ENCODE measurements at regions of chr15 and their contacts with region 1.

Region 1: DNA sequence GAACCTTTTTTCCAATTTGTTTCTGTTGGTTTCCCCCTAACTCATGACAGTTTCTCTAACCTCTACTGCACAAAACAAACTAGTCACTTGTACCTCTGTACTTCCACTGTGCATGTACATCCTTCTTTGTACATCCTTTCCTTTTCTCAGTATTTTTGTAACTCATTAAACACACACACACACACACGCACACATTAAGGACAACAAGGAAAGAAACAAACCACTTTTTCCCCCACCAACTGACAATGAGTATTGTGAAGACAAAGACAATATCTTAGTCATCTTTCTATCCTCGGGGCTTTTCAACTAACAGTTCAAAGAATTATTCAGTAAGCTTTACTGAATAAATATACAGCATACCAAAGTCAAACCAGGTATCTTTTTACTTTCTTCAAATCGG is 170.5 kb downstream of the VPS13C start:
- DNase-seq: no peak
- ATAC-seq: no peak
- H3K4me3 ChIP-seq: no peak overlapping the region
- H3K27ac ChIP-seq: no peak overlapping the region
- H3K4me1 ChIP-seq: no peaks in the 10 kb centered on the region
- H3K27me3 ChIP-seq: no peaks in the 10 kb centered on the region
- CTCF ChIP-seq: no peak

Region 2: DNA sequence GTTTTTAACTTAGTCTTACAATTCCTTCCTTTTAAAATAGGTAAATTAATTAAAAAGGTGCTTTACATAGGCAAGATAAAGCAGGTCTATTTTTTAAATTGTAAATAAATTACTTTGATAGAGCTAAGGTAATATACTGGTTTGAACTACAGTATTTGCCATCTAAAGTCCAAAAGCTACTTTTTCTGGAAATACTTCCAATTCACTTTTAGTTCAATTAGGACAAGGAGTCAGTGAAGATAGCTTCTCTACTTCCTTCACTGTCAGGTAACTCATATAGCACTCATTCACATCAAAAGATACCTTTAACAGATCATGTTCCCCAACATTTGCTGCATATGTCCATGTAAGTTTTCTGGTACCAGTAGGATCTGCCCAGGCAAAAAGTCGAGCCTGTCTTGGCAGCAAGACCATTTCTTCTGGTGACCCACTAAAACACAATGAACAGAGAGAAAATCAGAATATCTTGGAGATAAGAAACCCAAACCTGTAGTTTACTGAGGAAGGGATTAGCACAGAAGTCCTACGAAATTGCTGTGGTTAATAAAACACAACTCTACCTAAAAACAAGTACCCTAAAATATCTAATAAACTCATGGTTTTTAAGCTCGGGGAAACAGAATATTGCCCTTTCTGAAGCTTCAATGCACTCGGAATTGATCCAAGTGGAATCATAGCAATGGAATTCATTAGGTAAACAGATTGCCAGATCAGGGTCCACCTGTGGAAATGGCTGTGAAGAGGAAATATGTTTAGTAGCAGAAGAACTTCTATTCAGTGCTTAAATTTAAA is 17.5 kb after region 1 on chr15:
- CTCF ChIA-PET with region 1: no interaction called
- POLR2A ChIA-PET with region 1: no interaction called
- in situ Hi-C with region 1: no loop called
- intact Hi-C with region 1: loop called (anchors 2 kb)
- DNase-seq: no peak
- ATAC-seq: no peak
- H3K4me3 ChIP-seq: no peak overlapping the region
- H3K27ac ChIP-seq: no peak overlapping the region
- H3K4me1 ChIP-seq: no peaks in the 10 kb centered on the region
- H3K27me3 ChIP-seq: no peaks in the 10 kb centered on the region
- CTCF ChIP-seq: no peak

Region 3: DNA sequence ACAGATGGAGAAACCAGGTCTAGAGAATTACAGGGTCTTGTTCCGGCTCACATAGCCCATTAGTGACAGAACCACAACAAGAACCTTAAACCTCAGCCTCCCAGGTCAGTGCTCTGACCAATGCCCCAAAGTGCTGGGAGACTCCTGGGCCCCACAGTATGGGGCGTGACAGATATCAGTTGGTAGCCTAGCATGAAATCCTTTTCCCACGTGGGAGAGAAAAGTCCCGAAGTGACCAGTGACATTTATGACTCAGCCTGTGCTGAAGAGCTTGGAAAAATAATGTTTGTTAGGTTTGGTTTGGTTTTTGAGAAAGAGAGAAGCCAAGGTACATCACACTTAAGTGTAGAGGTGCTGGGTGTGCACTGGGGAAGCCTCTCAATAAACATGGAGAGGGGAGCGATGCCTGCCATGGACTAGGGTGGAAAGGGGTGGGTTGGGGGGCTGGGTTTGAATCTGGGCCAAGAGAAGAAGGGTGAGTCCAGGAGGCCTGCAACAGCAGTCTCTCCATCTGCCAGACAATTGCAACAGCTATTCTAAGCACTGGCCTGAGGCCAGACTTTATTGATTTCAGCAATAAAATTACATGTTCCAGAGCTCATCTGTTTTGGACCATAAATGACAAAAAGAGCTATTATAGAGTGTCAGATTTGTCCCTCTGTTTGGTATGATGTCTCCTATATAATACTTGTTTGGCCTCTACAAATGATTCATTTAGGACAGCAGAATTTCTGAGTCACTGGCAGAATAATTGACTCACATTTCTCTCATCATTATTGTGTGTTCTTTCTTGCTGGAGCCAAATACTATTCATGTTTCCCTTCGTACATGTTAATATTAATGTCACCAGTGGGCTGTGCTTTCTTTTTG is 220.5 kb after region 1 on chr15:
- CTCF ChIA-PET with region 1: no interaction called
- POLR2A ChIA-PET with region 1: no interaction called
- in situ Hi-C with region 1: no loop called
- intact Hi-C with region 1: no loop called
- DNase-seq: peak; percentile 85
- ATAC-seq: no peak
- H3K4me3 ChIP-seq: no peak overlapping the region
- H3K27ac ChIP-seq: no peak overlapping the region
- H3K4me1 ChIP-seq: no peaks in the 10 kb centered on the region
- H3K27me3 ChIP-seq: no peaks in the 10 kb centered on the region
- CTCF ChIP-seq: no peak

Measured in Panc1 (cell line).